B cell (primary cell): ENCODE measurements at regions of chr12 and their contacts with region 1.

Region 1: GRCh38 chr12:120292661-120293531 is at the start of gene RNU4-1:
- DNase-seq: peak; percentile 94
- ATAC-seq: peak; percentile 59
- H3K4me3 ChIP-seq: peak within 1 kb of the TSS; percentile 61 to 87 (median 82)
- H3K4me3 Mint-ChIP-seq: no peak within 1 kb of the TSS
- H3K27ac ChIP-seq: peak within 1 kb of the TSS; percentile 99
- H3K27ac Mint-ChIP-seq: no peak within 1 kb of the TSS
- H3K4me1 ChIP-seq: peaks cover 14 to 20% of the 10 kb centered on the region in 2 donors
- H3K4me1 Mint-ChIP-seq: peaks cover 13% of the 10 kb centered on the region
- H3K27me3 ChIP-seq: no peaks in the 10 kb centered on the region
- H3K27me3 Mint-ChIP-seq: no peaks in the 10 kb centered on the region
- CTCF ChIP-seq: no peak
- total RNA-seq, gene RNU4-1: 3,269 and 3,426 TPM in 2 replicates

Region 2: GRCh38 chr12:120116792-120117651 is 175.9 kb before region 1 on chr12:
- CTCF ChIA-PET with region 1: no interaction called
- POLR2A ChIA-PET with region 1: interaction called, 4 read pairs
- intact Hi-C with region 1: loop called (anchors 2 kb)
- DNase-seq: peak; percentile 98
- ATAC-seq: peak; percentile 81
- H3K4me3 ChIP-seq: peak overlapping the region; percentile 61 to 92 (median 85)
- H3K4me3 Mint-ChIP-seq: peak overlapping the region; percentile 87
- H3K27ac ChIP-seq: peak overlapping the region; percentile 66 to 80
- H3K27ac Mint-ChIP-seq: peak overlapping the region; percentile 86
- H3K4me1 ChIP-seq: peaks cover 43 to 62% of the 10 kb centered on the region in 2 donors
- H3K4me1 Mint-ChIP-seq: peaks cover 74% of the 10 kb centered on the region
- H3K27me3 ChIP-seq: no peaks in the 10 kb centered on the region
- H3K27me3 Mint-ChIP-seq: no peaks in the 10 kb centered on the region
- CTCF ChIP-seq: no peak

Region 3: DNA sequence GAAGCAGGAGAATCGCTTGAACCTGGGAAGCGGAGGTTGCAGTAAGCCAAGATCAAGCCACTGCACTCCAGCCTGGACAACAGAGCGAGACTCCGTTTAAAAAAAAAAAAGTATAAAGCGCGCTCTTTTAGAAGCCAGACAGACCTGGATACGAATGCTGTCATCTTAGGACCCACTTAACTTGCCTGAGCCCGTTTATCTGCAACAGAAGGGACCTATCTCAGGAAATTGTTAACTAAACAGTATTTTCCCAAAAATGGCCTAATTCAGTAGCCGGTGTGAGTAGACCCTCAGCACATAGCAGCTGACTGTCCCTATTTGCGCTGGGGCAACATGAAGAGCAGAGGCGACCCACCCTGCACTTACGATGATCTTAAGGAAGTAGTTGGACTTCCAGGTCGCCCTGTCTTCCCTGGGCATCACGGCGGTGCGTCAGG is 92.5 kb before region 1 on chr12:
- CTCF ChIA-PET with region 1: interaction called, 12 read pairs
- POLR2A ChIA-PET with region 1: interaction called, 47 read pairs
- intact Hi-C with region 1: loop called (anchors 1 kb)
- DNase-seq: no peak
- ATAC-seq: no peak
- H3K4me3 ChIP-seq: peak overlapping the region; percentile 61 to 98 (median 93)
- H3K4me3 Mint-ChIP-seq: peak overlapping the region; percentile 95
- H3K27ac ChIP-seq: peak overlapping the region; percentile 49 to 80
- H3K27ac Mint-ChIP-seq: peak overlapping the region; percentile 100
- H3K4me1 ChIP-seq: peaks cover 22 to 29% of the 10 kb centered on the region in 2 donors
- H3K4me1 Mint-ChIP-seq: peaks cover 25% of the 10 kb centered on the region
- H3K27me3 ChIP-seq: no peaks in the 10 kb centered on the region
- H3K27me3 Mint-ChIP-seq: no peaks in the 10 kb centered on the region
- CTCF ChIP-seq: no peak

Region 4: GRCh38 chr12:120276734-120277133 is 16.2 kb before region 1 on chr12:
- CTCF ChIA-PET with region 1: no interaction called
- POLR2A ChIA-PET with region 1: interaction called, 11 read pairs
- intact Hi-C with region 1: no loop called
- DNase-seq: no peak
- ATAC-seq: no peak
- H3K4me3 ChIP-seq: no peak overlapping the region
- H3K4me3 Mint-ChIP-seq: no peak overlapping the region
- H3K27ac ChIP-seq: no peak overlapping the region
- H3K27ac Mint-ChIP-seq: no peak overlapping the region
- H3K4me1 ChIP-seq: no peaks in the 10 kb centered on the region
- H3K4me1 Mint-ChIP-seq: no peaks in the 10 kb centered on the region
- H3K27me3 ChIP-seq: peaks cover 0 to 5% (median 1%) of the 10 kb centered on the region in 4 experiments
- H3K27me3 Mint-ChIP-seq: peaks cover 4% of the 10 kb centered on the region
- CTCF ChIP-seq: no peak

Region 5: DNA sequence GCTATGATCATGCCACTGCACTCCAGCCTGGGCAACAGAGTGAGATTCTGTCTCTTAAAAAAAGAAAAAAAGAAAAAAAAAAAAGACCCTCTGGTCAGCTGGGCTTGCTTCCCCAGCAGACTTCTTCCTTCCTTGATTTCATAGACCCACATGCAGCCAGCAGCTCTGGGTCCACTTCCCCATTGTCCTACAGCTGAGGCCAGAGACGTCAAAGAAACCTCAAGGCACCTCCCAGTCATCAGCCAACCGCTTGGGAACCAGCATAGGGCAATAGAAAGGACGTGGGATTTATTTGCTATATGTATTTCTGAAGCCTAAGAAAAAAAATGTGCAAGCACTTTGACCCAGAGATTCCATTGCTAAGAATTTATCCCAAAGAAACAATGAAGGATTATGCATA is 646.6 kb after region 1 on chr12:
- CTCF ChIA-PET with region 1: no interaction called
- POLR2A ChIA-PET with region 1: no interaction called
- intact Hi-C with region 1: no loop called
- DNase-seq: no peak
- ATAC-seq: no peak
- H3K4me3 ChIP-seq: no peak overlapping the region
- H3K4me3 Mint-ChIP-seq: no peak overlapping the region
- H3K27ac ChIP-seq: no peak overlapping the region
- H3K27ac Mint-ChIP-seq: no peak overlapping the region
- H3K4me1 ChIP-seq: no peaks in the 10 kb centered on the region
- H3K4me1 Mint-ChIP-seq: no peaks in the 10 kb centered on the region
- H3K27me3 ChIP-seq: peaks cover 0 to 6% (median 2%) of the 10 kb centered on the region in 4 experiments
- H3K27me3 Mint-ChIP-seq: peaks cover 16% of the 10 kb centered on the region
- CTCF ChIP-seq: no peak